Naive thymus-derived CD4-positive, alpha-beta T cell (primary cell): ENCODE measurements at regions of chr11 and their contacts with region 1.

Region 1: GRCh38 chr11:13942983-13943382 is 19.5 kb upstream of the SPON1 start:
- DNase-seq: no peak
- ATAC-seq: no peak
- H3K4me3 ChIP-seq: no peak overlapping the region
- H3K4me3 Mint-ChIP-seq: peak overlapping the region in 1 of 10 donors; percentile 36
- H3K27ac ChIP-seq: no peak overlapping the region
- H3K27ac Mint-ChIP-seq: peak overlapping the region in 4 of 9 donors; percentile 0 to 54 (median 8)
- H3K4me1 ChIP-seq: peaks cover 28 to 50% of the 10 kb centered on the region in 2 donors
- H3K4me1 Mint-ChIP-seq: peaks cover 20 to 67% (median 54%) of the 10 kb centered on the region in 7 donors
- H3K27me3 ChIP-seq: no peaks in the 10 kb centered on the region
- H3K27me3 Mint-ChIP-seq: peaks cover 0 to 18% (median 0%) of the 10 kb centered on the region in 5 donors

Region 2: DNA sequence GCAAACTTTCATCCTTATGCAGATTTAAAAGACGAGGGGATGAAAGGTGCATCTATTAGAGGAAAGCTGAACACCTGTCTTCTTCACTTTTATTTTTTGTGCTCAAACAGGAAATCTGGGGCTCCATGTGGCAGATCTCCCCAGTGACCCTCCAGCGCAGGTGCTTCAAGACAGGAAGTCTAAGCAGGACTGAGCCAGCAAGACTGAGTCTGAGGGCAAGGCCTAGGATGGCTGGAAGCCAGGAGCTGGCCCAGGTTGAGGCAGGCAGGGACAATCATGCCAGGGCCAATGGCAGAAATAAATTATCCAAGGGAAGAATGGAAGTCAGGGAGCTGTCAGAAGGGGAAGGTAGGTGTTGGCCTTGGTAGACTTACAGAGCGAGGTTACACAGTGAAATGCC is 81.6 kb before region 1 on chr11:
- CTCF ChIA-PET with region 1: interaction called, 3 read pairs
- POLR2A ChIA-PET with region 1: interaction called, 6 read pairs
- intact Hi-C with region 1: loop called in 1 of 2 experiments (anchors 2 kb)
- DNase-seq: peak in 4 of 9 donors; percentile 11 to 19 (median 14)
- ATAC-seq: no peak
- H3K4me3 ChIP-seq: no peak overlapping the region
- H3K4me3 Mint-ChIP-seq: peak overlapping the region in 7 of 10 donors; percentile 6 to 66 (median 55)
- H3K27ac ChIP-seq: no peak overlapping the region
- H3K27ac Mint-ChIP-seq: peak overlapping the region in 8 of 9 donors; percentile 33 to 98 (median 71)
- H3K4me1 ChIP-seq: peaks cover 6 to 19% of the 10 kb centered on the region in 2 donors
- H3K4me1 Mint-ChIP-seq: peaks cover 20 to 33% (median 25%) of the 10 kb centered on the region in 7 donors
- H3K27me3 ChIP-seq: no peaks in the 10 kb centered on the region
- H3K27me3 Mint-ChIP-seq: no peaks in the 10 kb centered on the region

Region 3: DNA sequence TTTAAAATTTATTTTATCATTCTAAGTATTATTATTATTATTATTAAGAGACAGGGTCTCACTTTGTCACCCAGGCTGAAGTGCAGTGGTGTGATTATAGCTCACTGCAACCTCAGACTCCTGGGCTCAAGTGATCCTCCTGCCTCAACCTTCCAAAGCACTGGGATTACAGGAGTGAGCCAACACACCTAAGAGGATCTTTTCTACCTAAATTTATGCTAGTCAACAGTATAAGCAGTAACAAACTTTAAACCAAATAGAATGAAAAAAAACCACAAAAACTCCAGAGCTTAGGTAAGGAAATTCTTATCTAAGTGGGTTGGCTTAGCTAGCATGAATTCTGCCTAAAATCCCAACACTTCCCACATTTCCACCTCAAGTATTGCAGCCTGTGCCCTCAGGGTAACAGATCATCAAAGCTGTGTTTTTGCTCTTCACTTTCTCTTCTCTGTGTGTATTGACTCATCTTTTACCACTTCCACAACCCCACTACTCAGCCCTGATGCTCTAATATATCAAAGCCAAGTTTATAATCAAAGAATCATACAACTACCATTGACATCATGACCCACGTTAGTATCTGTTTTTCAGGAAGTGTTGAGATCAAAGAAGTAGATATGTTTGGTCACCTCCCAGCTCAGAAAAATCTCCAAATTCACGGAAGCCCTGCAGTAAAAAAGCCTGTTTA is 74.1 kb before region 1 on chr11:
- CTCF ChIA-PET with region 1: interaction called, 3 read pairs
- POLR2A ChIA-PET with region 1: interaction called, 28 read pairs
- intact Hi-C with region 1: loop called (anchors 1 kb)
- DNase-seq: peak in 7 of 9 donors; percentile 73 to 92 (median 88)
- ATAC-seq: peak; percentile 96
- H3K4me3 ChIP-seq: no peak overlapping the region
- H3K4me3 Mint-ChIP-seq: peak overlapping the region in 9 of 10 donors; percentile 2 to 70 (median 40)
- H3K27ac ChIP-seq: peak overlapping the region; percentile 87
- H3K27ac Mint-ChIP-seq: peak overlapping the region; percentile 86 to 97 (median 92)
- H3K4me1 ChIP-seq: peaks cover 9 to 19% of the 10 kb centered on the region in 2 donors
- H3K4me1 Mint-ChIP-seq: peaks cover 19 to 56% (median 43%) of the 10 kb centered on the region in 7 donors
- H3K27me3 ChIP-seq: no peaks in the 10 kb centered on the region
- H3K27me3 Mint-ChIP-seq: peaks cover 0 to 14% (median 0%) of the 10 kb centered on the region in 5 donors

Region 4: GRCh38 chr11:13907678-13908077 is 35.3 kb before region 1 on chr11:
- CTCF ChIA-PET with region 1: no interaction called
- POLR2A ChIA-PET with region 1: interaction called, 4 read pairs
- intact Hi-C with region 1: loop called in 1 of 2 experiments (anchors 5 kb)
- DNase-seq: no peak
- ATAC-seq: no peak
- H3K4me3 ChIP-seq: no peak overlapping the region
- H3K4me3 Mint-ChIP-seq: no peak overlapping the region
- H3K27ac ChIP-seq: no peak overlapping the region
- H3K27ac Mint-ChIP-seq: no peak overlapping the region
- H3K4me1 ChIP-seq: no peaks in the 10 kb centered on the region
- H3K4me1 Mint-ChIP-seq: no peaks in the 10 kb centered on the region
- H3K27me3 ChIP-seq: peaks cover 0 to 4% of the 10 kb centered on the region in 2 donors
- H3K27me3 Mint-ChIP-seq: peaks cover 0 to 30% (median 0%) of the 10 kb centered on the region in 5 donors